ENCODE measurements at regions of chr12 and their contacts with region 1.

Region 1: GRCh38 chr12:119667577-119668323 is at the start of gene PRKAB1:
- DNase-seq: peak; percentile 98
- ATAC-seq: peak; percentile 96
- H3K4me3 Mint-ChIP-seq: peak within 1 kb of the TSS; percentile 91
- H3K27ac Mint-ChIP-seq: peak within 1 kb of the TSS; percentile 91
- H3K4me1 Mint-ChIP-seq: peaks cover 48% of the 10 kb centered on the region
- H3K27me3 Mint-ChIP-seq: no peaks in the 10 kb centered on the region
- total RNA-seq, gene PRKAB1: 18.0 to 21.7 TPM

Region 2: GRCh38 chr12:119876761-119877638 is 209.2 kb after region 1 on chr12 and contains the start of gene CIT:
- CTCF ChIA-PET with region 1: no interaction called
- POLR2A ChIA-PET with region 1: no interaction called
- intact Hi-C with region 1: loop called (anchors 1 to 5 kb)
- DNase-seq: peak; percentile 93
- ATAC-seq: peak; percentile 100
- H3K4me3 Mint-ChIP-seq: peak within 1 kb of the TSS; percentile 82
- H3K27ac Mint-ChIP-seq: peak within 1 kb of the TSS; percentile 63
- H3K4me1 Mint-ChIP-seq: peaks cover 13% of the 10 kb centered on the region
- H3K27me3 Mint-ChIP-seq: no peaks in the 10 kb centered on the region
- total RNA-seq, gene CIT: 54.6 to 71.5 TPM

Region 3: GRCh38 chr12:119902084-119902509 is 234.3 kb after region 1 on chr12:
- CTCF ChIA-PET with region 1: no interaction called
- POLR2A ChIA-PET with region 1: interaction called, 4 read pairs
- intact Hi-C with region 1: loop called in 1 of 2 experiments (anchors 1 kb)
- DNase-seq: peak; percentile 88
- ATAC-seq: peak; percentile 99
- H3K4me3 Mint-ChIP-seq: no peak overlapping the region
- H3K27ac Mint-ChIP-seq: no peak overlapping the region
- H3K4me1 Mint-ChIP-seq: peaks cover 8% of the 10 kb centered on the region
- H3K27me3 Mint-ChIP-seq: no peaks in the 10 kb centered on the region

Region 4: GRCh38 chr12:119980242-119980641 is 312.5 kb after region 1 on chr12:
- CTCF ChIA-PET with region 1: no interaction called
- POLR2A ChIA-PET with region 1: no interaction called
- intact Hi-C with region 1: loop called (anchors 2 to 5 kb)
- DNase-seq: peak; percentile 21
- ATAC-seq: peak; percentile 96
- H3K4me3 Mint-ChIP-seq: peak overlapping the region; percentile 30
- H3K27ac Mint-ChIP-seq: peak overlapping the region; percentile 69
- H3K4me1 Mint-ChIP-seq: peaks cover 23% of the 10 kb centered on the region
- H3K27me3 Mint-ChIP-seq: peaks cover 6% of the 10 kb centered on the region

Region 5: GRCh38 chr12:120000556-120000955 is 332.8 kb after region 1 on chr12:
- CTCF ChIA-PET with region 1: no interaction called
- POLR2A ChIA-PET with region 1: no interaction called
- intact Hi-C with region 1: no loop called
- DNase-seq: no peak
- ATAC-seq: no peak
- H3K4me3 Mint-ChIP-seq: no peak overlapping the region
- H3K27ac Mint-ChIP-seq: peak overlapping the region; percentile 44
- H3K4me1 Mint-ChIP-seq: peaks cover 71% of the 10 kb centered on the region
- H3K27me3 Mint-ChIP-seq: no peaks in the 10 kb centered on the region

Region 6: DNA sequence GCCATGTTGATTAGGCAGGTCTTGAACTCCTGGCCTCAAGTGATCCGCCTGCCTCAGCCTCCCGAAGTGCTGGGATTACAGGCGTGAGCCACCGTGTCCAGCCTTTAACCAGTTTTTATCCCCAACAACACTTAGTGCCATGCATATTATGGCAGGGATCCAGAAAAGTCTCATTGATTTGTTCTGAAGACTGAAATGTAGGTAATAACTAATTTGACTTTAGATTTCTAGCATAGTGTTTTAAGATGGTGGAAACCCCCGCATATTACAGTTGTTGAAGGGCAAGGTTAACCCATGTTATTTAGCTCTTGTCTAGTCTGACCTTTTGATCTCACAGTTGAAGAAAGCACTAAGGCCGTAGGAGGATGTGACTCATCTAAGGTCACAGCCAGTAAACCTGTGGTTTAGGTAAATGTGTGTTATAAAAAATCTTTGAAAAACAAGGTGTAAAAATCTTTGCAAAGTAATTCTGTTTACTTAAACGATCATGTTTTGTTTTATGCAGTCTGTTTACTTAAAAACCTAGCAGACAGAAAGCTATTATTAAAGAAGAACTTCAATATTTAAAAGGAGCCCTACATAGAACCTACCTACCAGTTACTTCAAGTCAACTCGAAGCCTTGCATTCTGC is 346.0 kb after region 1 on chr12:
- CTCF ChIA-PET with region 1: no interaction called
- POLR2A ChIA-PET with region 1: no interaction called
- intact Hi-C with region 1: no loop called
- DNase-seq: peak; percentile 73
- ATAC-seq: peak; percentile 37
- H3K4me3 Mint-ChIP-seq: peak overlapping the region; percentile 41
- H3K27ac Mint-ChIP-seq: peak overlapping the region; percentile 99
- H3K4me1 Mint-ChIP-seq: peaks cover 91% of the 10 kb centered on the region
- H3K27me3 Mint-ChIP-seq: no peaks in the 10 kb centered on the region

Measured in activated CD4-positive, alpha-beta T cell treated with anti-CD3 and anti-CD28 coated beads for 36 hours (primary cell).